Esophagus squamous epithelium (tissue), 5 donors: ENCODE measurements at regions of chr12 and their contacts with region 1.

Region 1: GRCh38 chr12:6470375-6471163 is at the start of gene VAMP1:
- DNase-seq: peak; percentile 99
- H3K4me3 ChIP-seq: peak within 1 kb of the TSS; percentile 65 to 89 (median 67)
- H3K27ac ChIP-seq: peak within 1 kb of the TSS; percentile 84 to 96 (median 89)
- H3K4me1 ChIP-seq: peaks cover 6 to 53% (median 23%) of the 10 kb centered on the region in 3 donors
- H3K27me3 ChIP-seq: no peaks in the 10 kb centered on the region
- CTCF ChIP-seq: peak in 3 of 6 experiments; percentile 39 to 41 (median 39)
- POLR2A ChIP-seq: peak in 3 of 4 donors; percentile 53 to 99 (median 99)
- total RNA-seq, gene VAMP1: 1.2 to 9.1 (median 5.1) TPM

Region 2: DNA sequence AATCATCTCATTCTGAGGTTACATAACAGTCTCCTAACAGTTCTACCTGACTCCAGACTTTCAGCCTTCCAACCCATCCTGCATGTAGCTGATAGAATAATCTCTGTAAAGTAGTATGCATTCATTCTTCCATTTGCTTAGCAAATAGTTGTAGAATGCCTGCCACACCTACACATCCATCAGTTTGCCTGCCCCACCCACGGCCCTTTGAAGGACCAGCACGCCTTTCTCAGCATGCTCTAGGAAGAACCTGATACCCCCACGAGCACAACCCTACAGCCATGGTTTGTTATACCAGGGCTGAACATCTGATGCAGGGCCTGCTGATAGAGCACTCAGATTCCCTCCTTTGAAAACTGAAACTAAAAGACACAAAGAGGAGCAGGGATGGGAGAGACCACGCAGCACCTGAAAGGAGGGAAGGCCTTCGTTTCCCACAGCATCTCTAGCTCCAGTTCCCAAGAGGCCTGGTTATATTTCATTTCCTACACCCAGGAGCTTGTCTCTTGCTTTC is 730.6 kb before region 1 on chr12:
- intact Hi-C with region 1: no loop called
- DNase-seq: no peak
- H3K4me3 ChIP-seq: no peak overlapping the region
- H3K27ac ChIP-seq: no peak overlapping the region
- H3K4me1 ChIP-seq: peaks cover 0 to 13% (median 0%) of the 10 kb centered on the region in 3 donors
- H3K27me3 ChIP-seq: no peaks in the 10 kb centered on the region
- CTCF ChIP-seq: no peak
- POLR2A ChIP-seq: no peak

Region 3: GRCh38 chr12:6323340-6323994 is 147.1 kb before region 1 on chr12:
- intact Hi-C with region 1: loop called (anchors 10 kb)
- DNase-seq: no peak
- H3K4me3 ChIP-seq: peak overlapping the region in 2 of 4 donors; percentile 9 to 43
- H3K27ac ChIP-seq: peak overlapping the region; percentile 73 to 95 (median 82)
- H3K4me1 ChIP-seq: peaks cover 53 to 76% (median 66%) of the 10 kb centered on the region in 3 donors
- H3K27me3 ChIP-seq: no peaks in the 10 kb centered on the region
- CTCF ChIP-seq: peak in 5 of 6 experiments; percentile 37 to 64 (median 49)
- POLR2A ChIP-seq: no peak

Region 4: GRCh38 chr12:6533923-6534694 is 63.5 kb after region 1 on chr12 and contains the start of gene GAPDH:
- intact Hi-C with region 1: loop called (anchors 10 kb)
- DNase-seq: peak; percentile 56
- H3K4me3 ChIP-seq: peak within 1 kb of the TSS; percentile 90 to 99 (median 92)
- H3K27ac ChIP-seq: peak within 1 kb of the TSS; percentile 94 to 99 (median 98)
- H3K4me1 ChIP-seq: peaks cover 37 to 71% (median 40%) of the 10 kb centered on the region in 3 donors
- H3K27me3 ChIP-seq: no peaks in the 10 kb centered on the region
- CTCF ChIP-seq: peak in 1 of 6 experiments; percentile 13
- POLR2A ChIP-seq: peak in 2 of 4 donors; percentile 95 to 96
- total RNA-seq, gene GAPDH: 2,526 to 4,151 (median 3,597) TPM

Region 5: GRCh38 chr12:6672143-6672542 is 201.6 kb after region 1 on chr12:
- intact Hi-C with region 1: no loop called
- DNase-seq: no peak
- H3K4me3 ChIP-seq: no peak overlapping the region
- H3K27ac ChIP-seq: no peak overlapping the region
- H3K4me1 ChIP-seq: no peaks in the 10 kb centered on the region
- H3K27me3 ChIP-seq: no peaks in the 10 kb centered on the region
- CTCF ChIP-seq: no peak
- POLR2A ChIP-seq: no peak